A549 (cell line): ENCODE measurements at regions of chr3 and their contacts with region 1.

Region 1: DNA sequence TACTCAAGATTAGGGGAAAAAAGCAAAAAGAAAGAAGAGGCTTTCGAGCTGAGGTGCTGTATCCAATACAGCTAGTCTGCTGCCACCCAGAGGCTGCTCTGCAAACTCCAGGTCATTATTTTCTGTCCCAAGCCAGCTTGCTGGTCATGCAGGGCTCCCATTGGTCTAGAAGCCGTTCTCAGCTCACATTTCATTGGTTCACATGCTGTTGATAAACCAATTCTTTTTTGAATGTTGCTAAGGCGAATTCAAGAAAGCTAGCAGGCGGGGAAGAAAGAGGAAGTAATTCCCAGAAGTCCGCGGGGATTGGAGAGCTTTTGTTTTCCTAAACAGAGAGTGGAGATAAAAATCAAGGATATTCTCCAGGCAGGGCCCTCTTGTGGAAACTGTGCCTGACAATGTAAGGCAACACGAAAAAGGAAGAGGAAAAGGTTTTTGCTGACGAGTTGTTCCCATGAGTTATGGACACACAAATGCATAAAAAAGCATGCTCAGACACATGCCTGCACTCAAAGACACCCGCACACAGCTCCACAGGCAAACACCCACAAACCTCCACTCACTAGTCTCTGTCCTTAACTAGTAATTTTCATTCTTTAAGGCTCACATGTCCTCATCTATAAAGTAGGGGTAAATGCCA is 33.4 kb downstream of the FSTL1 start:
- DNase-seq: peak; percentile 97 to 99
- ATAC-seq: peak; percentile 92 to 98
- H3K4me3 ChIP-seq: peak overlapping the region; percentile 30
- H3K27ac ChIP-seq: peak overlapping the region; percentile 69 to 78
- H3K4me1 ChIP-seq: peaks cover 22% of the 10 kb centered on the region
- CTCF ChIP-seq: peak; percentile 95
- EP300 ChIP-seq: no peak
- POLR2A ChIP-seq: no peak
- RAD21 ChIP-seq: peak; percentile 86 to 87

Region 2: GRCh38 chr3:120348981-120349818 is 68.2 kb before region 1 on chr3 and contains the start of gene LRRC58:
- CTCF ChIA-PET with region 1: interaction called, 9 read pairs
- POLR2A ChIA-PET with region 1: interaction called, 35 read pairs
- DNase-seq: peak; percentile 82 to 95
- ATAC-seq: peak; percentile 91 to 94
- H3K4me3 ChIP-seq: peak within 1 kb of the TSS; percentile 70
- H3K27ac ChIP-seq: peak within 1 kb of the TSS; percentile 91 to 95
- H3K4me1 ChIP-seq: peaks cover 41% of the 10 kb centered on the region
- CTCF ChIP-seq: peak; percentile 35; the same call in 2 of the 3 replicates
- EP300 ChIP-seq: peak in 1 of 2 experiments; percentile 33; a peak in 1 of 5 replicates
- POLR2A ChIP-seq: peak; percentile 80
- RAD21 ChIP-seq: 0 out of 5 replicates have a peak, but pooled peaks of 1 of the 2 experiments have one; percentile 24
- polyA plus RNA-seq, gene LRRC58: 24.1 and 29.9 TPM in 2 replicates

Region 3: GRCh38 chr3:120432150-120432860 is 14.9 kb after region 1 on chr3:
- CTCF ChIA-PET with region 1: interaction called, 141 read pairs
- POLR2A ChIA-PET with region 1: interaction called, 4 read pairs
- DNase-seq: peak in 1 of 2 experiments; percentile 37
- ATAC-seq: no peak
- H3K4me3 ChIP-seq: no peak overlapping the region
- H3K27ac ChIP-seq: peak overlapping the region in 1 of 2 experiments; percentile 24; a peak in 2 of 6 replicates
- H3K4me1 ChIP-seq: peaks cover 40% of the 10 kb centered on the region
- CTCF ChIP-seq: no peak
- EP300 ChIP-seq: no peak
- POLR2A ChIP-seq: no peak
- RAD21 ChIP-seq: no peak

Region 4: GRCh38 chr3:120469447-120469846 is 52.1 kb after region 1 on chr3:
- CTCF ChIA-PET with region 1: interaction called, 11 read pairs
- POLR2A ChIA-PET with region 1: no interaction called
- DNase-seq: peak in 1 of 2 experiments; percentile 44
- ATAC-seq: peak in 1 of 2 experiments; percentile 77; a peak in 3 of 6 replicates
- H3K4me3 ChIP-seq: no peak overlapping the region
- H3K27ac ChIP-seq: peak overlapping the region in 1 of 2 experiments; percentile 63; a peak in 3 of 6 replicates
- H3K4me1 ChIP-seq: peaks cover 22% of the 10 kb centered on the region
- CTCF ChIP-seq: no peak
- EP300 ChIP-seq: no peak
- POLR2A ChIP-seq: no peak
- RAD21 ChIP-seq: no peak

Region 5: DNA sequence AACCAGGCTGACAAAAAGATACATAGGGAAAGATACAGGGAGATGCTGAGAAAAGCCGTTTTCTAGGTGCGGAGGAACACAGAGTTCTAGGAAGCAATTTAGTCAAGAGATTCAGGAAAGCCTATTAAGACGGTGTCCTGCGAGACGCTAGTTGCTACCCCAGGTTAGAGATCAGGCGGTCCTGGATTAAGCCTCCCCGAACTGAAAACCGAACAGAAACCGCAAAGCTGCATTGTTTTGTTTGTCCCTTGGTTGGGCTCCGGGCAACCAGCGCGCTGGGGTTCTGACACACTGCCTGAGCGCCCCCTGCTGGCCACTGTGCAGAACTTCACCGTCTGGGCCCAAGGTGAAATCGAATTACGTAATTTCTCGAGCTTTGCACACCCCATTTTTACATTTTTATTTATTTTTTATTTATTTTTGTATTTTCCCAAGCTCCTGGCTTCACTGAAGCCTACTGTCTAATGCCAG is 141.4 kb after region 1 on chr3:
- CTCF ChIA-PET with region 1: interaction called, 220 read pairs
- POLR2A ChIA-PET with region 1: interaction called, 18 read pairs
- DNase-seq: peak; percentile 78 to 84
- ATAC-seq: peak; percentile 58 to 84
- H3K4me3 ChIP-seq: peak overlapping the region; percentile 54
- H3K27ac ChIP-seq: peak overlapping the region; percentile 61 to 76
- H3K4me1 ChIP-seq: peaks cover 12% of the 10 kb centered on the region
- CTCF ChIP-seq: peak; percentile 96
- EP300 ChIP-seq: no peak
- POLR2A ChIP-seq: no peak
- RAD21 ChIP-seq: peak; percentile 90 to 96